ENCODE measurements at regions of chr1 and their contacts with region 1.

Region 1: GRCh38 chr1:25430666-25431505 is at the start of gene MACO1:
- DNase-seq: peak; percentile 93 to 99 (median 98)
- ATAC-seq: peak; percentile 91
- H3K4me3 ChIP-seq: peak within 1 kb of the TSS; percentile 100
- H3K4me3 Mint-ChIP-seq: peak within 1 kb of the TSS; percentile 93 to 99 (median 98)
- H3K27ac ChIP-seq: peak within 1 kb of the TSS; percentile 96
- H3K27ac Mint-ChIP-seq: peak within 1 kb of the TSS; percentile 96 to 100 (median 100)
- H3K4me1 ChIP-seq: peaks cover 30 to 33% of the 10 kb centered on the region in 2 donors
- H3K4me1 Mint-ChIP-seq: peaks cover 32 to 55% (median 48%) of the 10 kb centered on the region in 7 donors
- H3K27me3 ChIP-seq: no peaks in the 10 kb centered on the region
- H3K27me3 Mint-ChIP-seq: peaks cover 0 to 3% (median 0%) of the 10 kb centered on the region in 5 donors
- total RNA-seq, gene MACO1: 16.7 to 25.9 (median 22.0) TPM

Region 2: DNA sequence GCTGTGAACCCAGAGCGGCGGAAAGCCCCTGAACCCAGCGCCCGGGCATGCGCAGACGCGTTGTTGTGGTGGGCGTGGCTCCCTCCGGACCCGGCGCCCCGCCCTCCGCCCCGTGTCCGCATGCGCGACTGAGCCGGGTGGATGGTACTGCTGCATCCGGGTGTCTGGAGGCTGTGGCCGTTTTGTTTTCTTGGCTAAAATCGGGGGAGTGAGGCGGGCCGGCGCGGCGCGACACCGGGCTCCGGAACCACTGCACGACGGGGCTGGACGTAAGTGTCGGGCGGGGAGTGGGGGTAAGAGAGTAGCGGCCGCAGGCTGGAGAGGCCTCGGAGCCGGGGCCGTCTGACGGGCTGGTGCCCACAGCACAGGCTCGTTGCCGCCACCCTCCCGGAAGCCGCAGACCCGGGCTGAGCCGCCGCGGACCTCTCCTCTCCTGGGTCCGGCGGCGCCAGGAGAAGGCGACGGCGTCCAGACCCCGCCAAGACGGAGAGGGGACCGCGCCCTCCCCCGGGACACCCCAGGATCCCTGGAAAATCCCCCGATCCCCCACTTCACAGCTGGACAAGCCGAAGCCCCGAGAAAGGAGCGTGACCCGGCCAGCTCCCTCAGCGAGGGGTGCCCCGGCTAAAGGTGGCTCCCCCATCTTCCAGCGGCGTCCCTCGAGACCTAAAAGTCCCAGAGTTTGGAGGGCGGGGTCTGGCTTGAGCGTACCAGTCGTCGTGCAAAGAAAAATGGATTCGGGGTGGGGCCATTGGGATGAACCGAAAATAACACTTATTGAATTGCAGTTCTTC is 92.5 kb before region 1 on chr1 and contains the start of gene TMEM50A:
- CTCF ChIA-PET with region 1: no interaction called
- POLR2A ChIA-PET with region 1: interaction called, 3 read pairs
- intact Hi-C with region 1: loop called (anchors 2 kb)
- DNase-seq: peak; percentile 87 to 99 (median 92)
- ATAC-seq: peak; percentile 90
- H3K4me3 ChIP-seq: peak within 1 kb of the TSS; percentile 94
- H3K4me3 Mint-ChIP-seq: peak within 1 kb of the TSS; percentile 93 to 97 (median 94)
- H3K27ac ChIP-seq: peak within 1 kb of the TSS; percentile 97
- H3K27ac Mint-ChIP-seq: peak within 1 kb of the TSS; percentile 80 to 96 (median 94)
- H3K4me1 ChIP-seq: peaks cover 20 to 22% of the 10 kb centered on the region in 2 donors
- H3K4me1 Mint-ChIP-seq: peaks cover 26 to 58% (median 45%) of the 10 kb centered on the region in 7 donors
- H3K27me3 ChIP-seq: no peaks in the 10 kb centered on the region
- H3K27me3 Mint-ChIP-seq: no peaks in the 10 kb centered on the region
- total RNA-seq, gene TMEM50A: 61.6 to 149 (median 79.0) TPM

Region 3: GRCh38 chr1:25451908-25452307 is 21.0 kb after region 1 on chr1:
- CTCF ChIA-PET with region 1: interaction called, 4 read pairs
- POLR2A ChIA-PET with region 1: interaction called, 4 read pairs
- intact Hi-C with region 1: loop called in 1 of 2 experiments (anchors 2 kb)
- DNase-seq: no peak
- ATAC-seq: no peak
- H3K4me3 ChIP-seq: no peak overlapping the region
- H3K4me3 Mint-ChIP-seq: no peak overlapping the region
- H3K27ac ChIP-seq: no peak overlapping the region
- H3K27ac Mint-ChIP-seq: peak overlapping the region in 2 of 9 donors; percentile 8 to 46
- H3K4me1 ChIP-seq: no peaks in the 10 kb centered on the region
- H3K4me1 Mint-ChIP-seq: peaks cover 0 to 18% (median 4%) of the 10 kb centered on the region in 7 donors
- H3K27me3 ChIP-seq: no peaks in the 10 kb centered on the region
- H3K27me3 Mint-ChIP-seq: no peaks in the 10 kb centered on the region

Region 4: DNA sequence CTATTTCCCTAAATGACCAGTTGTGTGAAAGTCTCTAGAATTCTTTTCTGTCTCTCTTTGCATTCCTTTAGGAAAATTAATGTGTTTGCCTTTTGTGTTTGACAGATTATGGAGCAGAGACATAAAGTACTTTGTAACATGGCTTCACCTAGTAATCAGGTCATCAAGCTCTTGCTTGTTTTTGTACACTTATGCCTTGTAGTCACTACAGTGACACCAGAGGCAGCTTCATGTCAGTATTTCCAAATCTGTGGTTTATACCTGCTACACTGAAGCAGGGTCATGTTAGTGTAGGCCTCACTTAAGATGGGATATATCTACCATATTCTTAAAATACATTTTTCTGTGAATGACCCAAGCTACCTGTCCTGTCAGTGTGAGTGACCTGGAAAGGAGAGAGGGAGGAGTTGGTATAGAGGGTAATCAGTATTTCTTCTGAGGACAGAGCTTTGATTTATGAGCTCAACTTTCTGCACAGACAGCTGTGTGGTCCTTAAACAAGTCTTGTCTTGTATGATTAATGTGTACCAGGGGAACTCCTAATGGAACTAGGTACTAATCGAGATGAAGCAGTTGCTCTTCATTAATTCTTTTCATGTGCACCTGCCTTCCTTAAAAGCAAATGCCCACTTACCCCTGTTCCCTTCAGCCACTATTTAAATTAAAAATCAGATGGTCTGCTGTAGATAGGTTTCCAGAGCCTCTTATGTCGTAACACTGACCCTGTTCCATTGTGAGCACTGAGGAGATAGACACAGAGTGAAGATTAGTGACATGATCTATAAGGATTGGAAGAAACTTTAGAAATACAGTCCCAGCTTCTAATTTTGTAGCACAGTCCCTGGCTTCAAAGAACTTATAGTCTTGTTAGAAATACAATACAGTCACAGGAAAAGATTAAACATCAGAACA is 45.6 kb after region 1 on chr1:
- CTCF ChIA-PET with region 1: interaction called, 6 read pairs
- POLR2A ChIA-PET with region 1: interaction called, 24 read pairs
- intact Hi-C with region 1: loop called in 1 of 2 experiments (anchors 1 kb)
- DNase-seq: peak in 4 of 9 donors; percentile 23 to 37 (median 28)
- ATAC-seq: no peak
- H3K4me3 ChIP-seq: no peak overlapping the region
- H3K4me3 Mint-ChIP-seq: peak overlapping the region in 7 of 10 donors; percentile 2 to 64 (median 37)
- H3K27ac ChIP-seq: peak overlapping the region; percentile 48
- H3K27ac Mint-ChIP-seq: peak overlapping the region in 8 of 9 donors; percentile 55 to 97 (median 92)
- H3K4me1 ChIP-seq: peaks cover 9 to 42% of the 10 kb centered on the region in 2 donors
- H3K4me1 Mint-ChIP-seq: peaks cover 31 to 67% (median 59%) of the 10 kb centered on the region in 7 donors
- H3K27me3 ChIP-seq: no peaks in the 10 kb centered on the region
- H3K27me3 Mint-ChIP-seq: no peaks in the 10 kb centered on the region

Region 5: GRCh38 chr1:25566730-25567341 is 135.9 kb after region 1 on chr1:
- CTCF ChIA-PET with region 1: interaction called, 5 read pairs
- POLR2A ChIA-PET with region 1: no interaction called
- intact Hi-C with region 1: loop called in 1 of 2 experiments (anchors 1 kb)
- DNase-seq: peak in 4 of 9 donors; percentile 28 to 73 (median 50)
- ATAC-seq: peak; percentile 60
- H3K4me3 ChIP-seq: no peak overlapping the region
- H3K4me3 Mint-ChIP-seq: peak overlapping the region; percentile 74 to 100 (median 98)
- H3K27ac ChIP-seq: peak overlapping the region; percentile 83
- H3K27ac Mint-ChIP-seq: peak overlapping the region; percentile 72 to 98 (median 96)
- H3K4me1 ChIP-seq: peaks cover 39 to 40% of the 10 kb centered on the region in 2 donors
- H3K4me1 Mint-ChIP-seq: peaks cover 40 to 80% (median 68%) of the 10 kb centered on the region in 7 donors
- H3K27me3 ChIP-seq: no peaks in the 10 kb centered on the region
- H3K27me3 Mint-ChIP-seq: no peaks in the 10 kb centered on the region

Measured in naive thymus-derived CD4-positive, alpha-beta T cell (primary cell).